ENCODE measurements at regions of chr1 and their contacts with region 1.

Region 1: DNA sequence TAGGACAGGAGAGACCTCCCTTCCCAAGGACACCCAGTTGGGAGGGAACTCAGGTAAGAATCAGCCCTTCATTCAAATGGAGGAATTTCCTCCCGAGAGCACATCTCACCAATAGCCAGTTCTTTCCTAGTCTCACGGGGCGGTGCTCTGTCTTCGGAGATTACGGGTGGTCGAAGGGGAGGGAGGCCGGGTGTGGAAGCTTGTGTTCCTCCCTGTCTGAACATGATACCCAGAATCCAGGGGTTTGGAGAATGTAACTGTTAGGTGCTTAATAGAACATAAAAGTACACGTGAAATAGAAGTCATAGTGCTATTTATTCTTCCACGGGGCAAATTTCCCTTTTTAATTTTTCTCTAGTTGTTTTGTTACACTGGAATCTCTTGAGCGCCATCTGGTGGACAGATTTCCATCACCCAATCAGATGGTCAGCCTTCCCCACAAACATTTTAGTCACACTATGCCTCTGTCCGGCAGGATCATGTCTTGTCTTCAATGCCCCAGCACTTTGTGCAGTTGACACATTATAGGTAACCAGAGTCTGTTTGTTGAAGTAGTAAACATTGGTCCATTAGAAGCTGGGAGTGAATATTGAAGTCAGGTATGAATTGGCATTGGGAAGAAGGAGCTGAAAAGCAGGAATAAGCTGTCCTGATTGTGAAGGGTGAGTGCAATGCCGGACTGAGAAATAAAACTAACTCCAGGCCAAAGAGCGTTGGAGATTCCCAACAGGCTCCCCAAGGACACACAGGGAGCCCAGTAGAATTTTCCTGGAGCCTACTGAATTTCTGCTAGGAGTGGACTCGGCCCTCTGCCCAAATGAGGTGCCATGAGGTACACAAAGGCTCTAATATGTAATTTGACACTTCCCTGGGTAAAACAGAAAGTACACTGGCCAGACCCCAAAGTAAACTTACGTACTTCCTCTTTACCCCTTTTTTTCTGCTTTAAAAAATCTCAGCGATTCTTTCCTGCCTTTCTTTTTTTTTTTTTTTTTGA is 27.6 kb upstream of the ZNF697 start:
- DNase-seq: peak; percentile 71
- H3K4me3 Mint-ChIP-seq: no peak overlapping the region
- H3K27ac Mint-ChIP-seq: no peak overlapping the region
- H3K4me1 Mint-ChIP-seq: no peaks in the 10 kb centered on the region
- H3K27me3 Mint-ChIP-seq: peaks cover 4% of the 10 kb centered on the region

Region 2: GRCh38 chr1:119286587-119287181 is 389.0 kb before region 1 on chr1:
- CTCF ChIA-PET with region 1: no interaction called
- POLR2A ChIA-PET with region 1: no interaction called
- intact Hi-C with region 1: loop called (anchors 10 kb)
- DNase-seq: peak; percentile 25
- H3K4me3 Mint-ChIP-seq: no peak overlapping the region
- H3K27ac Mint-ChIP-seq: no peak overlapping the region
- H3K4me1 Mint-ChIP-seq: no peaks in the 10 kb centered on the region
- H3K27me3 Mint-ChIP-seq: peaks cover 7% of the 10 kb centered on the region

Region 3: GRCh38 chr1:119298687-119299303 is 376.9 kb before region 1 on chr1:
- CTCF ChIA-PET with region 1: no interaction called
- POLR2A ChIA-PET with region 1: no interaction called
- intact Hi-C with region 1: no loop called
- DNase-seq: no peak
- H3K4me3 Mint-ChIP-seq: no peak overlapping the region
- H3K27ac Mint-ChIP-seq: no peak overlapping the region
- H3K4me1 Mint-ChIP-seq: peaks cover 16% of the 10 kb centered on the region
- H3K27me3 Mint-ChIP-seq: peaks cover 18% of the 10 kb centered on the region

Region 4: DNA sequence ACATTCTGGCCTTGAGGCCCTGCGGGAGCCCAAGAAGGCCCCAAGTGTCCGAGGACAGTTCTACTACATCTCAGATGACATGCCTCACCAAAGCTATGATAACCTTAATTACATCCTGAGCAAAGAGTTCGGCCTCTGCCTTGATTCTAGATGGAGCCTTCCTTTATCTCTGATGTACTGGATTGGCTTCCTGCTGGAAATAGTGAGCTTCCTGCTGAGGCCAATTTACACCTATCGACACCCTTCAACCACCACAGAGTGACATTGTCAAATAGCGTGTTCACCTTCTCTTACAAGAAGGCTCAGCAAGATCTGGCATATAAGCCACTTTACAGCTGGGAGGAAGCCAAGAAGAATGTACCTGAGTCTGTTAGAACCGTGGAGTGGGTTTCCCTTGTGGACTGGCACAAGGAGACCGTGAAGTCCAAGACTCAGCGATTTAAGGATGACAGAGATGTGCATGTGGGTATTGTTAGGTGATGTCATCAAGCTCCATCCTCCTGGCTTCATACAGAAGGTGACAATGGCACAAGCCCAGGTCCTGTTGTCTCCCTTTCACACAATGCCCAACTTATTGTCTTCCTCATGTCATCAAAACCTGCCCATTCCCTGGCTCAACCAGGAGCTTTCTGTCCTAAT is 66.7 kb before region 1 on chr1:
- CTCF ChIA-PET with region 1: interaction called, 110 read pairs
- POLR2A ChIA-PET with region 1: no interaction called
- intact Hi-C with region 1: loop called (anchors 1 kb)
- DNase-seq: no peak
- H3K4me3 Mint-ChIP-seq: no peak overlapping the region
- H3K27ac Mint-ChIP-seq: no peak overlapping the region
- H3K4me1 Mint-ChIP-seq: no peaks in the 10 kb centered on the region
- H3K27me3 Mint-ChIP-seq: peaks cover 6% of the 10 kb centered on the region

Region 5: DNA sequence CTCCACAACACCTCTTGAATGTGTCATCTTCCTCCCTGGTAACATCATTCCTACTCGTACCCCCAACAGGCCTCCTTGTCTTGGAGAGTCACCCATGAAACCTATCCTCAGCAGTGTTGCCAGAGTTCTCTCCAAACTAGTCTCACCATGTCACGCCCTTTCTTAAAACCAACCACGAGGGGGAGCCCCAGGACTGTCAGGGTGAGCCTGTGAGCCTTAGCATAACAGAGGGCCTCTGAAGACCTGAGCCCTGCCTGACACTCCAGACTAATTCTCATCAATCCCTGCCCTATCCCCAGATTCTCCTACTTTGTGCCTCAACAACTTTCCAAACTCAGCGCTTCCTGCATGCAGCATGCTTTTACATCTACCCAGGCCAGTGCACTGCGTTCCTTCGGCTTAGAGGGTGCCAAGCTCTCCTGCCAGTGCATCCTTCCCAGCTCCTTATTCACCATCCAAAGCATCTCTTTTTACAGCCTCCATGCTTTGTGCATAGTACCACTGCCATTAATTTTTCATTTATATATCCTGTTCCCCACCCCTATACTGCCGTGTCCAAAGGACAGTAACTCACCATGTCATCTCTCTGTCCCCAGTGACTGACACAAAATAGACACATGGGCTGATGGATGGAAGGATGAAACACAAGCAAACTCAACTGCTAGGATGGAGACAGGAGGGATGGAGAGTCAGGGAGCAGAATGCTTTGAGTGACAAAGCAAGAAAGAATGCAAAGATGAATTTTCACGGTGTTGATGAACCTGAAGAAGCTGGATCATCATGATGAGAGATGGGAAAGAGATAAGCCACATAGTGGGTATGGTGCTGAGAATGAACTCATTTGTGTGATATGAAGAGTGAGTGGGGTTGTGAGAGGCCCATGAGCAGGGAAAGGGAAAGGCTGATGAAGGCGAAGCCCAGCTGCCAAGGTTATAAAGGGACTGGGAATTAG is 61.6 kb before region 1 on chr1:
- CTCF ChIA-PET with region 1: interaction called, 110 read pairs
- POLR2A ChIA-PET with region 1: no interaction called
- intact Hi-C with region 1: loop called (anchors 1 kb)
- DNase-seq: peak; percentile 77
- H3K4me3 Mint-ChIP-seq: no peak overlapping the region
- H3K27ac Mint-ChIP-seq: no peak overlapping the region
- H3K4me1 Mint-ChIP-seq: no peaks in the 10 kb centered on the region
- H3K27me3 Mint-ChIP-seq: peaks cover 2% of the 10 kb centered on the region

Region 6: DNA sequence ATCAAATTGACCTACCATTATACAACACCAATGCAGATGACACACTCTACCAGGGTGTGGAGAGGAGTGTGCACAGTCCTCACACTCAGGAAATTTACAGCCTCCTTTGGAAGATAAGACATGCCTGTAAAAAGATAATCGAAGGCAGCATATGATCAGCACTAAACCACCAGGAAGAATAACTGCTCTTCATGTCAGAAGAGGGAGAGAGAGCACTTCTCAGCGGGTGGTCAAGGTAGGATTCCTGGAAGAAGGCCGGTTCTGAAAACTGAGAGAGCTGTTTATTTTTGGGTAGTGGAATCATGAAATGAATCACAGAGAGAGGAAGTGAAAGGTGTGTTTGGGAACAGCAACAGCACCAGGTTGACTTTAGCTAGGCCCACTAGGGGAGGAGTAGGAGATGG is 13.6 kb before region 1 on chr1:
- CTCF ChIA-PET with region 1: interaction called, 31 read pairs
- POLR2A ChIA-PET with region 1: no interaction called
- intact Hi-C with region 1: no loop called
- DNase-seq: no peak
- H3K4me3 Mint-ChIP-seq: no peak overlapping the region
- H3K27ac Mint-ChIP-seq: no peak overlapping the region
- H3K4me1 Mint-ChIP-seq: no peaks in the 10 kb centered on the region
- H3K27me3 Mint-ChIP-seq: peaks cover 13% of the 10 kb centered on the region

Region 7: GRCh38 chr1:119713749-119714456 is 38.3 kb after region 1 on chr1:
- CTCF ChIA-PET with region 1: no interaction called
- POLR2A ChIA-PET with region 1: no interaction called
- intact Hi-C with region 1: no loop called
- DNase-seq: no peak
- H3K4me3 Mint-ChIP-seq: peak overlapping the region; percentile 86
- H3K27ac Mint-ChIP-seq: no peak overlapping the region
- H3K4me1 Mint-ChIP-seq: peaks cover 17% of the 10 kb centered on the region
- H3K27me3 Mint-ChIP-seq: peaks cover 20% of the 10 kb centered on the region

Region 8: GRCh38 chr1:119859647-119860046 is 184.0 kb after region 1 on chr1:
- CTCF ChIA-PET with region 1: no interaction called
- POLR2A ChIA-PET with region 1: no interaction called
- intact Hi-C with region 1: no loop called
- DNase-seq: peak; percentile 15
- H3K4me3 Mint-ChIP-seq: no peak overlapping the region
- H3K27ac Mint-ChIP-seq: no peak overlapping the region
- H3K4me1 Mint-ChIP-seq: peaks cover 8% of the 10 kb centered on the region
- H3K27me3 Mint-ChIP-seq: no peaks in the 10 kb centered on the region